Gastrocnemius medialis (tissue), 4 donors: ENCODE measurements at regions of chr4 and their contacts with region 1.

Region 1: DNA sequence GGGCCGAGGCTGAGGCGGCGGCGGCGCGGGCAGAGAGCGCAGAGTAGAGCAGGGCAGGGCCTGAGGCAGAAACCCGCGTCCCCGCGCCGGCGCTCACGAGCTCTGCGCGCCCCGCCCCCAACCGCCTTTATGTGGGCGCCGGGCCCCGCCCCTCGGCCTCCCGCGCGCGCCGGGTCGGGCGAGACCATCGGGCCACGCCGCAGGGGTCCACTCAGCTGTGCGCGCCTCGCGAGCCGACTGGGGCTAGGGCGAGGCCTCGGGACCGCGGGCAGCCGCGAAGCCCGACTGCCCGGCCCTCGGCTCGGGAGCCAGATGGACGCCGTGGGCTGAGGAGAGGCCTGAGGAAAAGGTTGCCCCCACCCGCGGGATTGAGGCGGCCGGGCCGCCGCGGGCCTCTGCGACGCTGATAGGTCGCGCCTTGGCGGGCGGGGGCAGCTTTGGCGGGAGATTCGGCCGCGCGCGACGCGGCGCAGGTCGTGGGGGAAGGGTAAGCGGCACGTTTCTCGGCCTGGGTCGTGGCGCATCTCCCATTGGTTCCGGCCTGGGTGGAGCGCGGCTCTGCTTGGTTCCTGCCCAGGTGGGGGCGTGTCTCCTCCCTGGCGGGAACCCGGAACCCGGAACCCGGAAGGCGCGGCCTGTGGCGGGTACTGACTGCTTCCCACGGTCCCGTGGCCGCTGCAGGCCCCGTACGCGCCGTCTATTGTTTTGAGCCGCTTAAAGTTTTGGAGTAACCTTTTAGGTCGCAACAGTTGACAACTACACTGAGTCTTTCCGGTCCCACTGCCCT is at the start of gene SLBP:
- DNase-seq: peak; percentile 93 to 94
- ATAC-seq: peak; percentile 87 to 89
- H3K4me3 ChIP-seq: peak within 1 kb of the TSS; percentile 66 to 77 (median 74)
- H3K27ac ChIP-seq: peak within 1 kb of the TSS; percentile 91 to 96 (median 95)
- H3K4me1 ChIP-seq: peaks cover 18 to 25% of the 10 kb centered on the region in 2 donors
- H3K27me3 ChIP-seq: no peaks in the 10 kb centered on the region
- CTCF ChIP-seq: peak in 1 of 5 experiments; percentile 24
- POLR2A ChIP-seq: peak; percentile 94 to 95
- total RNA-seq, gene SLBP: 17.0 to 25.6 (median 21.0) TPM

Region 2: DNA sequence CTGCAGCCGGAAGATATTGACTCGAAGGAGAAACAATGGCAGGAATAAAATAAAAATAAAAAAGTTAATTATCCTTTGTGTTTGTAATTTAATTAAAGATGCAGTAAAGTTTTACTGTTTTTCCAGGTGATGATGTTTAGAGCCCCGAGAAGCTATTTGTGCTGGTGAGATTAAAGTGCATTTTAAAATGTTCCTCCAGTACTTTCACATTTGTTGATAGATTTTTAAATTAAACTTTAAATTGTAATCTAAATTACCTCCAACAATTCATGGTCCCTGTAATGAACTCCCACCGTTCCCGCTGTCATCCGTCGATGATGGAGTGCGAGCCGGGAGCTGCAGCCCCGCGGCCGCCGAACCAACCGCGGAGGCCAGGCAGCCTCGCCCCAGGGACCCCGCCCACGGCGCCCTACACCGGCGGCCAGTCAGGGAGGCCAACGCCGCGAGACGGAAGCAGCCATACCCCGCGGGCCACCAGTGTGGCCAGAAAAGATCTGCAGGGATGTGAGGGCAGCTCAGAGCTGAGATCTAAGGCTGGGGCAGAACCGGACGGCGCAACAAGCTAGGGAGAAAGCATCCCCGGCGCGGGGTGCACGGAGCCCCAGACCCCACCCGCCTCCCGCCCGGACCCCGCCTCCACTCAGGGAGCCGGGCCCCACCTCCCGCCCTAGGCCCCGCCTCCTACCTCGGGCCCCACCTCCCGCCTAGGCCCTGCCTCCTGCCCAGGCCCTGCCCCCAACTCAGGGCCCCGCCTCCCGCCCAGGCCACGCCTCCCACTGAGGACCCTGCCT is 132.3 kb before region 1 on chr4:
- in situ Hi-C with region 1: no loop called
- intact Hi-C with region 1: no loop called
- DNase-seq: peak; percentile 78 to 83
- ATAC-seq: peak; percentile 70 to 72
- H3K4me3 ChIP-seq: peak overlapping the region; percentile 50 to 62 (median 55)
- H3K27ac ChIP-seq: peak overlapping the region; percentile 57 to 74 (median 64)
- H3K4me1 ChIP-seq: peaks cover 0 to 5% of the 10 kb centered on the region in 2 donors
- H3K27me3 ChIP-seq: peaks cover 24 to 52% (median 35%) of the 10 kb centered on the region in 3 donors
- CTCF ChIP-seq: no peak
- POLR2A ChIP-seq: peak; percentile 17 to 22

Region 3: GRCh38 chr4:1683736-1684505 is 28.5 kb before region 1 on chr4 and contains the start of gene FAM53A:
- in situ Hi-C with region 1: no loop called
- intact Hi-C with region 1: loop called (anchors 1 kb)
- DNase-seq: peak in 1 of 2 donors; percentile 79
- ATAC-seq: peak; percentile 85 to 86
- H3K4me3 ChIP-seq: peak within 1 kb of the TSS; percentile 62 to 85 (median 71)
- H3K27ac ChIP-seq: peak within 1 kb of the TSS; percentile 68 to 86 (median 80)
- H3K4me1 ChIP-seq: peaks cover 0 to 11% of the 10 kb centered on the region in 2 donors
- H3K27me3 ChIP-seq: no peaks in the 10 kb centered on the region
- CTCF ChIP-seq: peak in 4 of 5 experiments; percentile 17 to 39 (median 26)
- POLR2A ChIP-seq: peak; percentile 64 to 68
- total RNA-seq, gene FAM53A: 1.8 to 5.2 (median 2.8) TPM

Region 4: DNA sequence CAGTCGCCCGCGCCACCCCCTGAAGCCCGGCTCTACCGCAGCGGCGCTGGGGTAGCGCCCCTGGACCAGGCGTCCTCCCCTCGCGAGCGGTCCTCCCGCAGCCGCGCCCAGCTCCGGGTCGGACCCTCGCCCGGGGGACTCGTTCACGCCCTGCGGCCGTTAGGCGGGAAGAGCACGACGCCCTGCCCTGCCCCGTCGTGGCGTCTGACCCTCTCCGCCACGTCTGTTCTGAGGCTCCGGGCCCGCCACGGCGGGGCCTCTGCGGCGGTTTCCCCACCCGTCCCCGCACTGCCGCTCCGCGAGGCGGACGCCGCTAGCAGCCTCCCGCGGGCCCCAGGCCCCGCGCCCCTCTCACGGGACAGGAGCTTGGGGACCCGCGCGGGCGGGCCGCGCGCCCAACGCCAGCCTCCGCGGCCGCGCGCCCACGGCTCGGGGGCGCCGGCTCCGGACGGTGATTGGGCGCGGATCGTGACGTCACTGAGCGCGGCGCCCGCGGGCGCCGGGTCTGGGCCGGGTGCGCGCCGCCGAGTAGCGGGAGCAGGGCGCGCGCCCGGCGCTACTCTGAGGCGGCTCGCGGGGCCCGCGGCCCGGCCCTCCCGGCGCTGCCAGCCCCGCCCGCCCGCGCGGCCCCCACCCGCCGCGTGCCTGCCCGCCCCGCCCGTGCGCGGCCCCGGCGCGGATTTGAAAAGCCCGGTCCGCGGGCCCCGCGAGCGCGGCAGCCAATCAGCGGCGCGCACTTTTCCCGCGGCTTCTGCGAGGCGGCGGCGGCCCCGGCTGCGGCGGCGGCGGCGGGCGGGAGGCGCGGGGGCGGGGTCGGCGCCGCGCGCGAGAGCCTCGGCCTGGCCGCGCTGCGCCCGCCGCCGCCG is 158.4 kb after region 1 on chr4 and contains the start of gene NSD2:
- in situ Hi-C with region 1: no loop called
- intact Hi-C with region 1: loop called (anchors 1 kb)
- DNase-seq: peak; percentile 78 to 79
- ATAC-seq: peak; percentile 84
- H3K4me3 ChIP-seq: peak within 1 kb of the TSS; percentile 68 to 91 (median 84)
- H3K27ac ChIP-seq: peak within 1 kb of the TSS; percentile 87 to 96 (median 91)
- H3K4me1 ChIP-seq: peaks cover 16 to 23% of the 10 kb centered on the region in 2 donors
- H3K27me3 ChIP-seq: peaks cover 2 to 9% (median 6%) of the 10 kb centered on the region in 3 donors
- CTCF ChIP-seq: peak in 1 of 5 experiments; percentile 12
- POLR2A ChIP-seq: peak; percentile 69 to 73
- total RNA-seq, gene NSD2: 14.8 to 21.3 (median 16.8) TPM